Calu3 (cell line): ENCODE measurements at regions of chr12 and their contacts with region 1.

Region 1: DNA sequence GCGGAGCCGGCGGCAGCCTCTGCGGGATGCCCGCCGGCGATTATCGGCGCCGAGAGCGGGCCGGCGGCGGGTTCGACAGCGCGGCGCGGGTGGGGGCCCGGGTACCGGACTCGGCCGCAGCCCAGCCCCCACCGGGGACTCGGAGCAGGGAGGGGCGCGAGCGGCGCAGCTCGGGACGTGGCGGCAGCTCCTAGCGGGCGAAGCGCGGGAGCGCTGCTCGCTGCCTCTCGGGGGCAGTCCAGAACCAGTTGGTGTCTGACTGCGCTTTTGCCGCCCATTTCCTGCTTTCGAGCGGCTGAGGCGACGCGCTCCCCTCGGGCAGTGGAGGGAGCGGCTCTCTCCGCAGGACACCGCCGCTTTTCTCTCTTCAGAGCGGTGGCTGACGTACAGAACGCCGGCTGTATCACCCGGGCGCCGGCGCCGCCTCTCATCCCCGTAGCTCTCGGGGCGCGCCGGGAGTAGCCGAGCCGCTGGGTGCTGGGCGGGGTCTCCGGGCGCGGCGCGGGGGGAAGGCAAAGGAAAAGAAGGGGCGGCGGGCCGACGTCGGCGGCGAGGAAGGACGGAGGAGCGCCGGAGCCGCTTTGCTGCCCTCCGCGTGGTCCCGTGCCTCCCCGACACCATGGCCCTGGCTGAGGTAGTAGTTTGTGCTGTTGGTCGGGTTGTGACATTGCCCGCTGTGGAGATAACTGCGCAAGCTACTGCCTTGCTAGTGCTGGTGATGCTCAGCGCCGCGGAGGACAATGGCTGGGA is 136.6 kb downstream of the MON2 start:
- DNase-seq: peak; percentile 92
- H3K4me3 Mint-ChIP-seq: peak overlapping the region; percentile 88
- H3K27ac Mint-ChIP-seq: peak overlapping the region; percentile 99
- H3K4me1 Mint-ChIP-seq: peaks cover 18% of the 10 kb centered on the region
- H3K27me3 Mint-ChIP-seq: no peaks in the 10 kb centered on the region
- CTCF ChIP-seq: peak; percentile 47

Region 2: GRCh38 chr12:62581288-62582064 is 21.8 kb before region 1 on chr12:
- CTCF ChIA-PET with region 1: interaction called, 13 read pairs
- intact Hi-C with region 1: no loop called
- DNase-seq: no peak
- H3K4me3 Mint-ChIP-seq: no peak overlapping the region
- H3K27ac Mint-ChIP-seq: no peak overlapping the region
- H3K4me1 Mint-ChIP-seq: no peaks in the 10 kb centered on the region
- H3K27me3 Mint-ChIP-seq: no peaks in the 10 kb centered on the region
- CTCF ChIP-seq: peak; percentile 27

Region 3: GRCh38 chr12:62724947-62725447 is 121.8 kb after region 1 on chr12:
- CTCF ChIA-PET with region 1: interaction called, 5 read pairs
- intact Hi-C with region 1: loop called (anchors 2 kb)
- DNase-seq: peak; percentile 88
- H3K4me3 Mint-ChIP-seq: peak overlapping the region; percentile 44
- H3K27ac Mint-ChIP-seq: peak overlapping the region; percentile 81
- H3K4me1 Mint-ChIP-seq: peaks cover 68% of the 10 kb centered on the region
- H3K27me3 Mint-ChIP-seq: no peaks in the 10 kb centered on the region
- CTCF ChIP-seq: no peak

Region 4: GRCh38 chr12:62732861-62733427 is 129.7 kb after region 1 on chr12:
- CTCF ChIA-PET with region 1: no interaction called
- intact Hi-C with region 1: loop called (anchors 2 kb)
- DNase-seq: peak; percentile 74
- H3K4me3 Mint-ChIP-seq: no peak overlapping the region
- H3K27ac Mint-ChIP-seq: peak overlapping the region; percentile 97
- H3K4me1 Mint-ChIP-seq: peaks cover 60% of the 10 kb centered on the region
- H3K27me3 Mint-ChIP-seq: no peaks in the 10 kb centered on the region
- CTCF ChIP-seq: no peak

Region 5: GRCh38 chr12:62799126-62799736 is 196.0 kb after region 1 on chr12:
- CTCF ChIA-PET with region 1: interaction called, 11 read pairs
- intact Hi-C with region 1: loop called (anchors 1 kb)
- DNase-seq: peak; percentile 83
- H3K4me3 Mint-ChIP-seq: no peak overlapping the region
- H3K27ac Mint-ChIP-seq: peak overlapping the region; percentile 60
- H3K4me1 Mint-ChIP-seq: peaks cover 36% of the 10 kb centered on the region
- H3K27me3 Mint-ChIP-seq: no peaks in the 10 kb centered on the region
- CTCF ChIP-seq: peak; percentile 74

Region 6: GRCh38 chr12:63037746-63038718 is 434.8 kb after region 1 on chr12:
- CTCF ChIA-PET with region 1: no interaction called
- intact Hi-C with region 1: no loop called
- DNase-seq: no peak
- H3K4me3 Mint-ChIP-seq: no peak overlapping the region
- H3K27ac Mint-ChIP-seq: no peak overlapping the region
- H3K4me1 Mint-ChIP-seq: no peaks in the 10 kb centered on the region
- H3K27me3 Mint-ChIP-seq: peaks cover 13% of the 10 kb centered on the region
- CTCF ChIP-seq: no peak